ENCODE measurements at regions of chr1 and their contacts with region 1.

Region 1: GRCh38 chr1:204806943-204807687 is 63.5 kb upstream of the NFASC start:
- DNase-seq: peak; percentile 66 to 86 (median 78)
- H3K4me3 ChIP-seq: peak overlapping the region; percentile 83
- H3K4me3 Mint-ChIP-seq: peak overlapping the region; percentile 56 to 93 (median 87)
- H3K27ac ChIP-seq: no peak overlapping the region
- H3K27ac Mint-ChIP-seq: peak overlapping the region in 4 of 8 donors; percentile 3 to 82 (median 66)
- H3K4me1 ChIP-seq: peaks cover 5% of the 10 kb centered on the region
- H3K4me1 Mint-ChIP-seq: peaks cover 1 to 9% (median 6%) of the 10 kb centered on the region in 3 donors
- H3K27me3 ChIP-seq: no peaks in the 10 kb centered on the region
- H3K27me3 Mint-ChIP-seq: peaks cover 1 to 3% of the 10 kb centered on the region in 2 donors

Region 2: DNA sequence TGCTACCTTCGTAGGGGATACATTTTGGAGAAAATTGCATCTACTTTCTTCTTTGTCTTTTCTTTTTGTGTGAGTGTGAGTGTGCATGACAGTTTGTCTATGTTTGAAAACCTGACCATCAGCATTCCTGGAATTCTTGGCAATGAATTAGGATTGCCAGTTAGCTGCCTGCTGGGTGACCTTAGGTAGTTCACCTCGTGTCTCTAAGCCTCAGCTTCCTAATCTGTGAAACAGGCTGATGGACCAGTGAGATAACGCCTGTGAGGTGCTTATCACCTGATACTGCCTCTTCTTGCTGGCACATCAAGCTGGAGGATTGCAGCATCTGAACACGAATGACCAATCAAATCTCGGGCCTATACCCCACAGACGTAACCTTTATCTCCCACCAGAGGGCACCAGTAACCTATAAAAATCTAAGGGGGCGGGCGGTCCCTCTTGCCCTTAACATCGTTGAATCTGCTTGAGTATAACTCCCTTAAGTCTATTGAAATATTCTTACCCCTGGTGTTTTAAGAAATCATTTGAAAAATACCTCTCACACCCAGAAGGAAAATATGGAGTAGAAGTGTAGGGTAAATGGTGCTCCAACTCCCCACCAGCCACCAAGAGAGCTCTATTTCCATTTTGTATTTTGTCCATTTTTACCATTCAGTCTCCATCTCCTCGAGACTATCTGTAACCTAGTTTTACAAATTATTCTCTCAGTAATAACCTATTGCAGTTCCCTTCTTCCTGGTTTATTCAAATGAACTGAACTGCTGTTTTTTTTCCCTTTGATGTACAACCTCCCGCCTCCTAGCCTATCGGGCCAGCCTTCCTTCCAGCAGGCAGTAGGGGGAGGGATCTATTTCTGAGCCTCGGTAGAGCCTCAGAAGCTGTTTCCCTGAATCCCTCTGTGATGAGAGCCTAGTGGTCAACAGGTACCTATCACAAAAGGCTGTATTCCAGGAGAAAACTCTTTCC is 241.2 kb before region 1 on chr1:
- CTCF ChIA-PET with region 1: interaction called, 18 read pairs
- POLR2A ChIA-PET with region 1: no interaction called
- DNase-seq: peak; percentile 19 to 71 (median 59)
- H3K4me3 ChIP-seq: no peak overlapping the region
- H3K4me3 Mint-ChIP-seq: peak overlapping the region in 2 of 7 donors; percentile 18 to 47
- H3K27ac ChIP-seq: no peak overlapping the region
- H3K27ac Mint-ChIP-seq: peak overlapping the region; percentile 33 to 92 (median 79)
- H3K4me1 ChIP-seq: peaks cover 34% of the 10 kb centered on the region
- H3K4me1 Mint-ChIP-seq: peaks cover 29 to 44% (median 36%) of the 10 kb centered on the region in 3 donors
- H3K27me3 ChIP-seq: no peaks in the 10 kb centered on the region
- H3K27me3 Mint-ChIP-seq: no peaks in the 10 kb centered on the region

Region 3: GRCh38 chr1:204763706-204764427 is 43.2 kb before region 1 on chr1:
- CTCF ChIA-PET with region 1: interaction called, 12 read pairs
- POLR2A ChIA-PET with region 1: no interaction called
- DNase-seq: peak; percentile 14 to 66 (median 51)
- H3K4me3 ChIP-seq: peak overlapping the region; percentile 10
- H3K4me3 Mint-ChIP-seq: peak overlapping the region in 5 of 7 donors; percentile 3 to 30 (median 8)
- H3K27ac ChIP-seq: no peak overlapping the region
- H3K27ac Mint-ChIP-seq: no peak overlapping the region
- H3K4me1 ChIP-seq: peaks cover 9% of the 10 kb centered on the region
- H3K4me1 Mint-ChIP-seq: peaks cover 2 to 8% (median 7%) of the 10 kb centered on the region in 3 donors
- H3K27me3 ChIP-seq: peaks cover 6% of the 10 kb centered on the region
- H3K27me3 Mint-ChIP-seq: peaks cover 33 to 57% of the 10 kb centered on the region in 2 donors

Region 4: GRCh38 chr1:204791453-204792353 is 15.4 kb before region 1 on chr1:
- CTCF ChIA-PET with region 1: interaction called, 40 read pairs
- POLR2A ChIA-PET with region 1: no interaction called
- DNase-seq: peak; percentile 54 to 83 (median 63)
- H3K4me3 ChIP-seq: no peak overlapping the region
- H3K4me3 Mint-ChIP-seq: peak overlapping the region in 1 of 7 donors; percentile 46
- H3K27ac ChIP-seq: no peak overlapping the region
- H3K27ac Mint-ChIP-seq: no peak overlapping the region
- H3K4me1 ChIP-seq: no peaks in the 10 kb centered on the region
- H3K4me1 Mint-ChIP-seq: peaks cover 0 to 4% (median 0%) of the 10 kb centered on the region in 3 donors
- H3K27me3 ChIP-seq: peaks cover 4% of the 10 kb centered on the region
- H3K27me3 Mint-ChIP-seq: peaks cover 19 to 50% of the 10 kb centered on the region in 2 donors

Region 5: GRCh38 chr1:204819495-204819894 is 12.4 kb after region 1 on chr1:
- CTCF ChIA-PET with region 1: interaction called, 48 read pairs
- POLR2A ChIA-PET with region 1: no interaction called
- DNase-seq: no peak
- H3K4me3 ChIP-seq: no peak overlapping the region
- H3K4me3 Mint-ChIP-seq: no peak overlapping the region
- H3K27ac ChIP-seq: no peak overlapping the region
- H3K27ac Mint-ChIP-seq: no peak overlapping the region
- H3K4me1 ChIP-seq: no peaks in the 10 kb centered on the region
- H3K4me1 Mint-ChIP-seq: no peaks in the 10 kb centered on the region
- H3K27me3 ChIP-seq: no peaks in the 10 kb centered on the region
- H3K27me3 Mint-ChIP-seq: peaks cover 9 to 41% of the 10 kb centered on the region in 2 donors

Region 6: GRCh38 chr1:204834336-204834735 is 27.2 kb after region 1 on chr1:
- CTCF ChIA-PET with region 1: interaction called, 11 read pairs
- POLR2A ChIA-PET with region 1: no interaction called
- DNase-seq: no peak
- H3K4me3 ChIP-seq: no peak overlapping the region
- H3K4me3 Mint-ChIP-seq: no peak overlapping the region
- H3K27ac ChIP-seq: no peak overlapping the region
- H3K27ac Mint-ChIP-seq: no peak overlapping the region
- H3K4me1 ChIP-seq: no peaks in the 10 kb centered on the region
- H3K4me1 Mint-ChIP-seq: peaks cover 0 to 1% (median 1%) of the 10 kb centered on the region in 3 donors
- H3K27me3 ChIP-seq: peaks cover 14% of the 10 kb centered on the region
- H3K27me3 Mint-ChIP-seq: peaks cover 37 to 73% of the 10 kb centered on the region in 2 donors

Region 7: DNA sequence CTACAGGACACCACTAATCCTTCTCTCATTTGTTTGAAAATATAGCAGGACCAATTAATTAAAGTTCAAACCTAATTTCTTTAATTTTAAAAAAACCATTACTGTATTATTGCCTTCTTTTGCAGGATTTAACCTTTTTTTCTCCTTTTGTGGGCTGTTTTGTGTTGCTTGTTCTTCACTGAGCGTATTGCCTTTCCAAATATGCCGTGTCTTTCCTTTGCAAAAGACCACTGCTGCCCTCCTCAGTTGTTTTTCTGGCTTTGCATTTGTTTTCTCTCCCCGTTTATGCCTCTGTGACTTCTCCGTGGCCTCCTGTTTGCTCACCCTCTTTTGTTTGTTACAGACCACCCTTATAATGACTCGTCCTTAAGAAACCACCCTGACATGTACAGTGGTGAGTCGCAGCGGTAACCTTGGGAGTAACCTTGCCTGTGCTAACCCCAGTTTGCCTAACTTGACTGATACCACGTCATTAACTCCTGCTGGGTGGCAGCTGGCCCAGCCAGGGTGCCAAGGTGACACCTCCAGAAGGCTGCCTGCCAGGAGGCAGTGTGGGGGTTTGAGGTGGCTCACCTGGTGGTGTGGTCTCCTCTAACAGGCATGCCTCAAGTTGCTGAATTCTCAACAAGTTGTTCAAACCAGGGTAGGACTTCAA is 154.8 kb after region 1 on chr1:
- CTCF ChIA-PET with region 1: no interaction called
- POLR2A ChIA-PET with region 1: no interaction called
- DNase-seq: no peak
- H3K4me3 ChIP-seq: no peak overlapping the region
- H3K4me3 Mint-ChIP-seq: peak overlapping the region in 1 of 7 donors; percentile 28
- H3K27ac ChIP-seq: no peak overlapping the region
- H3K27ac Mint-ChIP-seq: peak overlapping the region in 1 of 8 donors; percentile 29
- H3K4me1 ChIP-seq: no peaks in the 10 kb centered on the region
- H3K4me1 Mint-ChIP-seq: no peaks in the 10 kb centered on the region
- H3K27me3 ChIP-seq: no peaks in the 10 kb centered on the region
- H3K27me3 Mint-ChIP-seq: peaks cover 17 to 40% of the 10 kb centered on the region in 2 donors